B cell (primary cell): ENCODE measurements at regions of chr16 and their contacts with region 1.

Region 1: GRCh38 chr16:31333686-31334649 is 21.0 kb upstream of the ITGAX start:
- DNase-seq: peak; percentile 68
- ATAC-seq: peak; percentile 85
- H3K4me3 ChIP-seq: no peak overlapping the region
- H3K4me3 Mint-ChIP-seq: no peak overlapping the region
- H3K27ac ChIP-seq: no peak overlapping the region
- H3K27ac Mint-ChIP-seq: no peak overlapping the region
- H3K4me1 ChIP-seq: peaks cover 7 to 19% of the 10 kb centered on the region in 2 donors
- H3K4me1 Mint-ChIP-seq: peaks cover 23% of the 10 kb centered on the region
- H3K27me3 ChIP-seq: peaks cover 0 to 28% (median 4%) of the 10 kb centered on the region in 4 experiments
- H3K27me3 Mint-ChIP-seq: peaks cover 12% of the 10 kb centered on the region
- CTCF ChIP-seq: peak; percentile 64

Region 2: GRCh38 chr16:31271621-31272190 is 62.3 kb before region 1 on chr16:
- CTCF ChIA-PET with region 1: no interaction called
- POLR2A ChIA-PET with region 1: no interaction called
- intact Hi-C with region 1: no loop called
- DNase-seq: no peak
- ATAC-seq: no peak
- H3K4me3 ChIP-seq: no peak overlapping the region
- H3K4me3 Mint-ChIP-seq: no peak overlapping the region
- H3K27ac ChIP-seq: no peak overlapping the region
- H3K27ac Mint-ChIP-seq: no peak overlapping the region
- H3K4me1 ChIP-seq: no peaks in the 10 kb centered on the region
- H3K4me1 Mint-ChIP-seq: peaks cover 9% of the 10 kb centered on the region
- H3K27me3 ChIP-seq: no peaks in the 10 kb centered on the region
- H3K27me3 Mint-ChIP-seq: no peaks in the 10 kb centered on the region
- CTCF ChIP-seq: no peak

Region 3: DNA sequence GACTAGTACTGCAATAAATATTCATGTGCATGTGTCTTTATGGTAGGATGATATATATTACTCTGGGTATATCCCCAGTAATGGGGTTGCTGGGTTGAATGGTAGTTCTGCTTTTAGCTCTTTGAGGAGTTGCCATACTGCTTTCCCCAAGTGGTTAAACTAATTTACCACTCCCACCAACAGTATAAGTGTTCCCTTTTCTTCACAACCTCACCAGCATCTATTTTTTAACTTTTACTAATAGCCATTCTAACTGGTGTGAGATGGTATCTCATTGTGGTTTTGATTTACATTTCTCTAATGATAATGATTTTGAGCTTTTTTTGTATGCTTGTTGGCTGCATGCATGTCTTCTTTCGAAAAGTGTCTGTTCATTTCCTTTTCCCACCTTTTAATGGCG is 41.3 kb before region 1 on chr16:
- CTCF ChIA-PET with region 1: no interaction called
- POLR2A ChIA-PET with region 1: no interaction called
- intact Hi-C with region 1: no loop called
- DNase-seq: no peak
- ATAC-seq: no peak
- H3K4me3 ChIP-seq: no peak overlapping the region
- H3K4me3 Mint-ChIP-seq: no peak overlapping the region
- H3K27ac ChIP-seq: no peak overlapping the region
- H3K27ac Mint-ChIP-seq: no peak overlapping the region
- H3K4me1 ChIP-seq: no peaks in the 10 kb centered on the region
- H3K4me1 Mint-ChIP-seq: peaks cover 9% of the 10 kb centered on the region
- H3K27me3 ChIP-seq: no peaks in the 10 kb centered on the region
- H3K27me3 Mint-ChIP-seq: no peaks in the 10 kb centered on the region
- CTCF ChIP-seq: no peak

Region 4: DNA sequence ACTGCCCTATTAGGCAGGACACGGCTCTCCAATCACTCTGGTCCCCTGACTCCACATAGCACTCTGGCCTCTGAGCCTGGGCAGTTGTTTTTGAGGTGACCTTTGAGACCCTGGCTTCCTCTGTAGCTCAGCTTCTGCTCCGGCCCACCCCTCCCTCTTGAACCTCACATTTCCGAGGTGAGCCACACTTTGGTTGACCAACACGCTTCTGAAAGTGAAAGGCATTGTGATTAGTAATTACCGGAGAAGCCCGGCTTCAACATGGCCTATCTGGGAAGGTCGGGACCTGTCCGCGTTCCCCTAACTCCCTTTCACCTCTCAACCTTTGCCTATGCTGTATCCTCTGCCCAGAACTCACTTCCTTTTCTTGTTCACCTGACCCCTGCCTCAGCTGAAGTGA is 10.7 kb after region 1 on chr16:
- CTCF ChIA-PET with region 1: interaction called, 10 read pairs
- POLR2A ChIA-PET with region 1: no interaction called
- intact Hi-C with region 1: no loop called
- DNase-seq: no peak
- ATAC-seq: no peak
- H3K4me3 ChIP-seq: no peak overlapping the region
- H3K4me3 Mint-ChIP-seq: peak overlapping the region; percentile 49
- H3K27ac ChIP-seq: no peak overlapping the region
- H3K27ac Mint-ChIP-seq: peak overlapping the region; percentile 77
- H3K4me1 ChIP-seq: peaks cover 18 to 34% of the 10 kb centered on the region in 2 donors
- H3K4me1 Mint-ChIP-seq: peaks cover 41% of the 10 kb centered on the region
- H3K27me3 ChIP-seq: no peaks in the 10 kb centered on the region
- H3K27me3 Mint-ChIP-seq: no peaks in the 10 kb centered on the region
- CTCF ChIP-seq: no peak

Region 5: GRCh38 chr16:31404353-31405064 is 70.5 kb after region 1 on chr16:
- CTCF ChIA-PET with region 1: no interaction called
- POLR2A ChIA-PET with region 1: no interaction called
- intact Hi-C with region 1: no loop called
- DNase-seq: no peak
- ATAC-seq: no peak
- H3K4me3 ChIP-seq: no peak overlapping the region
- H3K4me3 Mint-ChIP-seq: no peak overlapping the region
- H3K27ac ChIP-seq: no peak overlapping the region
- H3K27ac Mint-ChIP-seq: no peak overlapping the region
- H3K4me1 ChIP-seq: peaks cover 0 to 7% of the 10 kb centered on the region in 2 donors
- H3K4me1 Mint-ChIP-seq: peaks cover 4% of the 10 kb centered on the region
- H3K27me3 ChIP-seq: no peaks in the 10 kb centered on the region
- H3K27me3 Mint-ChIP-seq: peaks cover 3% of the 10 kb centered on the region
- CTCF ChIP-seq: no peak